ENCODE measurements at regions of chr1 and their contacts with region 1.

Region 1: GRCh38 chr1:112011215-112011614 is 21.7 kb upstream of the KCND3 start:
- DNase-seq: no peak
- ATAC-seq: peak in 2 of 4 donors; percentile 62 to 74
- H3K4me3 ChIP-seq: no peak overlapping the region
- H3K27ac ChIP-seq: no peak overlapping the region
- H3K4me1 ChIP-seq: peaks cover 0 to 4% (median 0%) of the 10 kb centered on the region in 12 donors
- H3K27me3 ChIP-seq: no peaks in the 10 kb centered on the region
- CTCF ChIP-seq: no peak
- POLR2A ChIP-seq: no peak

Region 2: GRCh38 chr1:112040891-112041740 is 29.9 kb after region 1 on chr1:
- intact Hi-C with region 1: no loop called
- DNase-seq: no peak
- ATAC-seq: no peak
- H3K4me3 ChIP-seq: no peak overlapping the region
- H3K27ac ChIP-seq: no peak overlapping the region
- H3K4me1 ChIP-seq: peaks cover 0 to 8% (median 0%) of the 10 kb centered on the region in 12 donors
- H3K27me3 ChIP-seq: no peaks in the 10 kb centered on the region
- CTCF ChIP-seq: no peak
- POLR2A ChIP-seq: no peak

Region 3: GRCh38 chr1:112092656-112093371 is 81.6 kb after region 1 on chr1:
- intact Hi-C with region 1: loop called in 1 of 10 experiments (anchors 10 kb)
- DNase-seq: no peak
- ATAC-seq: no peak
- H3K4me3 ChIP-seq: no peak overlapping the region
- H3K27ac ChIP-seq: no peak overlapping the region
- H3K4me1 ChIP-seq: no peaks in the 10 kb centered on the region
- H3K27me3 ChIP-seq: peaks cover 0 to 3% (median 0%) of the 10 kb centered on the region in 9 donors
- CTCF ChIP-seq: no peak
- POLR2A ChIP-seq: no peak

Region 4: GRCh38 chr1:112188611-112189010 is 177.4 kb after region 1 on chr1:
- intact Hi-C with region 1: loop called in 1 of 10 experiments (anchors 10 kb)
- DNase-seq: no peak
- ATAC-seq: no peak
- H3K4me3 ChIP-seq: no peak overlapping the region
- H3K27ac ChIP-seq: no peak overlapping the region
- H3K4me1 ChIP-seq: no peaks in the 10 kb centered on the region
- H3K27me3 ChIP-seq: no peaks in the 10 kb centered on the region
- CTCF ChIP-seq: no peak
- POLR2A ChIP-seq: no peak

Region 5: DNA sequence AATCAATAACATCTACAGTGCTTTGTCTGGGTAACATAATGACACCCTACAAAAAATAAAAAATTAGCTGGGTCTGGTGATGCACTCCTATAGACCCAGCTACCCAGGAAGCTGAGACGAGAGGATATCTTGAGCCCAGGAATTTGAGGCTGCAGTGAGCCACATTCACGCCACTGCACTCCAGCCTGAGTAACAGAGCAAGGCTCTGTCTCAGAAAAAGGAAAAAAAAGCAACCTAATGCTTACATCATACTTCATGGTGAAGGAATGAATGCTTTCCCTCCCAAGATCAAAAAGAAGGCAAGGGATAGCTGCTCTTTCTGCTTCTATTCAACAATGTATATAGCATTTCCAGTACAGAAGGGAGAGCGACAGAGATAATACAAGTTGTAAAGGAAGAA is 360.6 kb after region 1 on chr1:
- intact Hi-C with region 1: no loop called
- DNase-seq: no peak
- ATAC-seq: no peak
- H3K4me3 ChIP-seq: no peak overlapping the region
- H3K27ac ChIP-seq: no peak overlapping the region
- H3K4me1 ChIP-seq: peaks cover 0 to 5% (median 0%) of the 10 kb centered on the region in 12 donors
- H3K27me3 ChIP-seq: peaks cover 0 to 10% (median 0%) of the 10 kb centered on the region in 9 donors
- CTCF ChIP-seq: no peak
- POLR2A ChIP-seq: no peak

Measured in heart left ventricle (tissue), 16 donors.